IMR-90 (cell line): ENCODE measurements at regions of chr2 and their contacts with region 1.

Region 1: GRCh38 chr2:71510196-71510807 is 56.9 kb downstream of the DYSF start:
- DNase-seq: peak; percentile 48
- ATAC-seq: peak; percentile 89
- H3K4me3 ChIP-seq: no peak overlapping the region
- H3K27ac ChIP-seq: no peak overlapping the region
- H3K4me1 ChIP-seq: no peaks in the 10 kb centered on the region
- H3K27me3 ChIP-seq: peaks cover 32% of the 10 kb centered on the region
- CTCF ChIP-seq: peak; percentile 85
- POLR2A ChIP-seq: no peak
- RAD21 ChIP-seq: peak; percentile 91

Region 2: DNA sequence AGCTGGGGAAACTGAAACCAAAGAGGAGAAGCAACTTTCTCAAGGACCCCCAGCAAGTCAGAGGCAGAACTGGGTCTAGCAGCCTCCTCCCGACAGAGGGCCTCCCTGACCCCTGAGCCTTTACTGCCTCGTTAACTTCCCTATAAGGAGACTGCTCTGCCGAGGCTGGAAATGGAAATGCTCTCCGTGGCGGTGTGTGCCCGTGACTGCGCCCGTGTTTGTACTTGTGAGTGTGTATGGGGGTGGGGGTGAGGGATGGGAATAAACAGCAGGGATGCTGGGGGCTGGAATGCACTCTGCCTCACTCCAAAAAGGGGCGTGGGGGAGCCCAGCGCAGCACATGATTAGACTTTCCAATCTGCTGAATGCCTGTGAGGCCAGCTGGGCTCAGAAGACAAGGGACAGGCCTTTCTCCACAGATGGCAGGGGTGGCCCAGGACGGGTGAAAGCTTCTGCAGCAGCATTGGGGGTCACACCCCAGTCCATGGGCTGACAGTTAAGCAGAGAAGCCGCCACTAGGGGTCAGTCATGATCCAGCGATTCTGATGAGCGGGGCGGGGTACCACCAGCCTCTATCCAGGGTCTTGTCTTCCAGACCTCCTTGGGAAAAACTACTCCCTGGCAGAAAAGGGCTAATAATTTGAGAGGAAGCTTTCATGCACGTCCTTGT is 353.0 kb before region 1 on chr2:
- CTCF ChIA-PET with region 1: no interaction called
- POLR2A ChIA-PET with region 1: no interaction called
- dilution Hi-C with region 1: no loop called
- in situ Hi-C with region 1: loop called (anchors 10 kb)
- intact Hi-C with region 1: loop called (anchors 1 kb)
- DNase-seq: peak; percentile 18
- ATAC-seq: peak; percentile 89
- H3K4me3 ChIP-seq: peak overlapping the region; percentile 26
- H3K27ac ChIP-seq: no peak overlapping the region
- H3K4me1 ChIP-seq: peaks cover 2% of the 10 kb centered on the region; the same call in 1 of the 2 replicates
- H3K27me3 ChIP-seq: peaks cover 8% of the 10 kb centered on the region; the same call in 1 of the 2 replicates
- CTCF ChIP-seq: peak; percentile 47
- POLR2A ChIP-seq: no peak
- RAD21 ChIP-seq: peak; percentile 57

Region 3: GRCh38 chr2:71223767-71224333 is 286.5 kb before region 1 on chr2:
- CTCF ChIA-PET with region 1: no interaction called
- POLR2A ChIA-PET with region 1: no interaction called
- dilution Hi-C with region 1: no loop called
- in situ Hi-C with region 1: no loop called
- intact Hi-C with region 1: loop called (anchors 5 kb)
- DNase-seq: peak; percentile 16
- ATAC-seq: no peak
- H3K4me3 ChIP-seq: no peak overlapping the region
- H3K27ac ChIP-seq: no peak overlapping the region
- H3K4me1 ChIP-seq: peaks cover 2% of the 10 kb centered on the region; the same call in 1 of the 2 replicates
- H3K27me3 ChIP-seq: peaks cover 4% of the 10 kb centered on the region; the same call in 1 of the 2 replicates
- CTCF ChIP-seq: no peak
- POLR2A ChIP-seq: no peak
- RAD21 ChIP-seq: peak; percentile 11; the same call in 1 of the 2 replicates

Region 4: GRCh38 chr2:71299507-71299906 is 210.8 kb before region 1 on chr2:
- CTCF ChIA-PET with region 1: interaction called, 69 read pairs
- POLR2A ChIA-PET with region 1: interaction called, 7 read pairs
- dilution Hi-C with region 1: no loop called
- in situ Hi-C with region 1: loop called (anchors 5 kb)
- intact Hi-C with region 1: loop called (anchors 1 kb)
- DNase-seq: peak; percentile 36
- ATAC-seq: peak; percentile 42; the same call in 1 of the 2 replicates
- H3K4me3 ChIP-seq: no peak overlapping the region
- H3K27ac ChIP-seq: no peak overlapping the region
- H3K4me1 ChIP-seq: no peaks in the 10 kb centered on the region
- H3K27me3 ChIP-seq: peaks cover 1% of the 10 kb centered on the region
- CTCF ChIP-seq: peak; percentile 68
- POLR2A ChIP-seq: no peak
- RAD21 ChIP-seq: peak; percentile 70

Region 5: DNA sequence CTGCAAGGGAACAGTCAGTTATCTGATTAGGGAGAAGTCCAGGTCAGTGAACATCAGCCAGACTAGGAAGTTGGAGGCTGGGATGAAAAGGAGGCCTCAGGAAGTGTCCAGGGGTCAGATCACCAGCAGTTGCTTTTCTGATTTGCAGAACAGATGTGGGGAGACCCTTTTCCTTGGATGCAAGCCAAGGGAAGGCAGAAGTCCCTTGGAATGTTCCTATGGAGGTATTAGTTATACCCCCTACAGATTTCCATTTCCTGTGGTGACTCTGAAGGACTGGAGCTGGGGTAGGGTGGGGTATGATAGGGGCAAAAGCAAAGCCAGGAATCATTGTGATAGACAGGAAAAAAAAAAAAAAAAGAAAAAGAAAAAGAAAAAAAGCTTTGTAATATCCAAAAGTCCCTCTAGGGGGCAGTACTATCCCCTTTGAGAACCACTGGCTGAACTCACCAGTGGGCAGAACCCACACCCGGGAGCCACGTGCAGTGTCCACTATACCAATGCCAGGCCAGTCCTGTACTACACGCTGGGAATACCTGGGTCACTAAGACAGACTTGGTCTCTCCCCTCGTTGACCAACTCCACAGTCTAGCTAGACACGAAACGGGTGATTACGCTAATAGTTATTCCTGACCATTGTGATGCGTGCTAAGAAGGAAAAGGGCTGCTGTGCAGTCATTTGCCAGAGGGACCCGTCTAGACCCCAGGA is 49.6 kb before region 1 on chr2:
- CTCF ChIA-PET with region 1: interaction called, 8 read pairs
- POLR2A ChIA-PET with region 1: no interaction called
- dilution Hi-C with region 1: no loop called
- in situ Hi-C with region 1: no loop called
- intact Hi-C with region 1: loop called (anchors 1 kb)
- DNase-seq: no peak
- ATAC-seq: peak; percentile 56
- H3K4me3 ChIP-seq: no peak overlapping the region
- H3K27ac ChIP-seq: no peak overlapping the region
- H3K4me1 ChIP-seq: peaks cover 3% of the 10 kb centered on the region; the same call in 1 of the 2 replicates
- H3K27me3 ChIP-seq: peaks cover 38% of the 10 kb centered on the region
- CTCF ChIP-seq: peak; percentile 62
- POLR2A ChIP-seq: no peak
- RAD21 ChIP-seq: peak; percentile 55

Region 6: GRCh38 chr2:71498261-71498701 is 12.0 kb before region 1 on chr2:
- CTCF ChIA-PET with region 1: interaction called, 11 read pairs
- POLR2A ChIA-PET with region 1: no interaction called
- dilution Hi-C with region 1: no loop called
- in situ Hi-C with region 1: no loop called
- intact Hi-C with region 1: no loop called
- DNase-seq: peak; percentile 89
- ATAC-seq: peak; percentile 79
- H3K4me3 ChIP-seq: no peak overlapping the region
- H3K27ac ChIP-seq: no peak overlapping the region
- H3K4me1 ChIP-seq: peaks cover 2% of the 10 kb centered on the region; the same call in 1 of the 2 replicates
- H3K27me3 ChIP-seq: no peaks in the 10 kb centered on the region
- CTCF ChIP-seq: no peak
- POLR2A ChIP-seq: no peak
- RAD21 ChIP-seq: no peak

Region 7: GRCh38 chr2:71772510-71773172 is 262.3 kb after region 1 on chr2:
- CTCF ChIA-PET with region 1: no interaction called
- POLR2A ChIA-PET with region 1: no interaction called
- dilution Hi-C with region 1: no loop called
- in situ Hi-C with region 1: no loop called
- intact Hi-C with region 1: no loop called
- DNase-seq: no peak
- ATAC-seq: no peak
- H3K4me3 ChIP-seq: no peak overlapping the region
- H3K27ac ChIP-seq: no peak overlapping the region
- H3K4me1 ChIP-seq: no peaks in the 10 kb centered on the region
- H3K27me3 ChIP-seq: peaks cover 7% of the 10 kb centered on the region
- CTCF ChIP-seq: no peak
- POLR2A ChIP-seq: no peak
- RAD21 ChIP-seq: no peak